ENCODE measurements at regions of chr3 and their contacts with region 1.

Region 1: GRCh38 chr3:71875461-71875947 is 90.6 kb upstream of the PROK2 start:
- DNase-seq: peak; percentile 63
- H3K4me3 Mint-ChIP-seq: no peak overlapping the region
- H3K27ac Mint-ChIP-seq: peak overlapping the region; percentile 17
- H3K4me1 Mint-ChIP-seq: peaks cover 29% of the 10 kb centered on the region
- H3K27me3 Mint-ChIP-seq: peaks cover 4% of the 10 kb centered on the region

Region 2: DNA sequence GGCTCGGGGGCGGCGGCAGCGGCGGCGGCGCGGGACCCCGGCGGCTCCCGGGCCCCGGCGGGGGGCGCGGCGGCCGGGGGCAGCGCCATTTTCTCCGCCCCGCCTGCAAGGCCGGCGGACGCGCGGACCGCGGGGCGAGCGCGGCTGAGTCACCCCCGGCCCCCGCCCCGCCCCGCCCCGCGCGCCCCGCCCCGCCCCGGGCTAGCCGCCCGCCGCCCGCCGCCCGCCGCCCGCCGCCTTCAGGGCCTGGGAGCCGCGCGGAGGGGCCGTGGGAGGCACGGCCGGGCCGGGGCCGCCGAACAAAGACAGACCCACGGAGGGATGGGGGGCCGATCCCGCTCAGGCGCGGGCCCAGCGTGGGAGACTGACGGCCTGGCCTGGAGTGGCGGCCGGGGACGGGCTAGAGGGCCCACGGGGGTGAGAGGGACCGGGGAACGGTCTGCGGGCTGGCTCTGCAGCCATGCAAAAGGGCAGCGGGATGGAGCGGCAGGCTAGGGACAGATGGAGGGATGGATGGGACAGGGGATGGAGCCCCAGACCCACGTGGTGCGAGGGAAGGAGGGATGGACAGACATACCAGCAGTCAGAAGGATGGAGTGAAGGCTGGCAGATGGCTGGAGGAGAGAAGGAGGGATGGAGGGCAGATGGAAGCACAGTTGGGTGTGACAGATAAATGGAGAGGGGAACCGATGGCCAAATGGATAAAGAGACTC is 150.1 kb before region 1 on chr3 and contains the start of gene EIF4E3:
- intact Hi-C with region 1: loop called (anchors 5 kb)
- DNase-seq: peak; percentile 28
- H3K4me3 Mint-ChIP-seq: peak within 1 kb of the TSS; percentile 88
- H3K27ac Mint-ChIP-seq: peak within 1 kb of the TSS; percentile 89
- H3K4me1 Mint-ChIP-seq: peaks cover 63% of the 10 kb centered on the region
- H3K27me3 Mint-ChIP-seq: peaks cover 2% of the 10 kb centered on the region
- total RNA-seq, gene EIF4E3: 17.3 and 17.9 TPM in 2 replicates

Region 3: DNA sequence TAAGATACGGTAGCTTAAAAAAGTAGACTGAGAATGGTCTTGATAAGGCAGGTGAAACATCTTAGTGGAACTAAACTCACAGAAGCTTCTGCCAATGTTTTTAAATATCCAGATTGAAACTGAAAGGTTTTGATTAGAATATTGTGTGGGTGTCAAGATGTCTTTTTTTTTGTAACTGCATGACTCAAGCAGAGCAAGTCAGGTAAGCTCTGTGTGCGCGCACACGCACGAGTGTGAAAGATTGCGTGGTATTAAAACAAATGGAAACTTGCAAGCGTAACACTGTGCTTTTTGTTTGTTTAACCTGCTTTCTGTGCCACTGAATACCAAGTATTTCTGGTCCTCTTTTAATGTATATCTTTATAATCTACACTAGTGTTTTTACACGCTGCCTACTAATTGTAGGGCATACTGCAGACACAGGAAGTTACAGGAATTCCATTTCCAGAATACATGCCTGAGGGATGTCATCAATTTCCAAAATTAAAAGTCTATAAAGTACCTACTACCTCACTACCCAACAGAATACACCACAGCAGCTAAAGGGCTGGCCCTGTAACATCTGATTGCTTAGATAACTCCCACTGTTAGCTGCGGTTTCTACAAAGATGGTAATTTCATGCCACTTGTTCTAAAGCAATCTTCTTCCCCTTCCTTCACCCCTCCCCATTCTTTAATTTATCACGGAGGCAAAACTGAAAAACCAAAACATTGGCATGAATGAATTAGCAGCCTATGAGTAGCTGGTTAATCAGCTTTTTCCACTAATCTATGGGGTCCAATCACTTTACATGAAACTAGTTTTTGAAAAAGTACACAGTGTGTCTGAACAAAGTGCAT is 500.0 kb after region 1 on chr3:
- intact Hi-C with region 1: loop called (anchors 10 kb)
- DNase-seq: no peak
- H3K4me3 Mint-ChIP-seq: peak overlapping the region; percentile 54
- H3K27ac Mint-ChIP-seq: peak overlapping the region; percentile 86
- H3K4me1 Mint-ChIP-seq: peaks cover 61% of the 10 kb centered on the region
- H3K27me3 Mint-ChIP-seq: no peaks in the 10 kb centered on the region

Region 4: GRCh38 chr3:72482589-72483321 is 607.3 kb after region 1 on chr3:
- intact Hi-C with region 1: loop called (anchors 10 kb)
- DNase-seq: peak; percentile 63
- H3K4me3 Mint-ChIP-seq: peak overlapping the region; percentile 61
- H3K27ac Mint-ChIP-seq: peak overlapping the region; percentile 90
- H3K4me1 Mint-ChIP-seq: peaks cover 76% of the 10 kb centered on the region
- H3K27me3 Mint-ChIP-seq: no peaks in the 10 kb centered on the region

Region 5: DNA sequence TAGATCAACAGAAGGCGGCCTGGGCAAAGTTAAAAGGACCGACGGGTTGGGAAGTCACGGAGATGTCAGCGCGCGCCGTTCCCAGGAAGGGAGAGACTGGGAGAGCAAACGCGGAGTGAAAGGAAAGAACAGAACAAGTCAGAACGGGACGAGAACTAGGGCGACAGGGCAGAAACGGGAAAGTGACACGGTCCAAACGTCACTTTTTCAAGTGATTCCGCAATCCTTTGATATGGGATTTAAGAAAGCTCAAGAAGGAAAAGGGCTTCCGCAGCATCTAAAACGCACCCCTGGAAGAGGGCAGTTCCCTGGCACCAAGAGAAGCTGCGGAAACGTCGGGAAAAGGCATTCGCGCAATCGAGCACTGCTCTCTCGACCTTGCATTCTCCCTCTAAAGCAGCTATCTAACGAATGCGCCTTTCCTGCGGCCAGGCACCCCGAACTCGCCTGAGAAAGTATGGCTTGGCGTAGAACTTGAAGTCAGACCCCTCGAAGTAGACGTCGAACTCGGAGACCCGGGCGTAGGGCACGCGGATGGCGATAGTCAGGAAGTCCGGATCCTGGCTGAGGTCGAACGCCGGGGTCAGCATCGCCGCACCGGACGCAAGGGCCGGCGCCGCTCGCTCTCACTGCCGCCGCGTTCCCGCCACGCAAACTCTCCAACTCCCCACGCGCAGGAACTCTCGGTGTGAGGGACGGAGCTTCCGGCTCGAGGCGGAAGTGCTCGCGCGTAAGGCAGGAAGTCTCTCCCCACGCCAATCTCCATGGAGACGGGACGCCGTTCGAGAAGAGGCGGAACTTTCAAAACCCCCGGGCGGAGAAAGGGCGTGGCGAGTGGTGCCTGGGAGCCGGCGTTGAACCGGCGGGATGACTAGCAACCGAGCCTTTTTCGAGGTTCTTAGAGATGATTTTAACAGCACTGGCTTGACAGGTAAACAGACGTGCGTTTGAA is 972.5 kb after region 1 on chr3 and contains the start of gene SHQ1:
- intact Hi-C with region 1: loop called (anchors 1 kb)
- DNase-seq: peak; percentile 91
- H3K4me3 Mint-ChIP-seq: peak within 1 kb of the TSS; percentile 99
- H3K27ac Mint-ChIP-seq: peak within 1 kb of the TSS; percentile 77
- H3K4me1 Mint-ChIP-seq: peaks cover 54% of the 10 kb centered on the region
- H3K27me3 Mint-ChIP-seq: no peaks in the 10 kb centered on the region
- total RNA-seq, gene SHQ1: 29.0 and 31.2 TPM in 2 replicates